Activated B cell treated with CpG ODN at 0.5 μM for 24 hours (primary cell): ENCODE measurements at regions of chr1 and their contacts with region 1.

Region 1: DNA sequence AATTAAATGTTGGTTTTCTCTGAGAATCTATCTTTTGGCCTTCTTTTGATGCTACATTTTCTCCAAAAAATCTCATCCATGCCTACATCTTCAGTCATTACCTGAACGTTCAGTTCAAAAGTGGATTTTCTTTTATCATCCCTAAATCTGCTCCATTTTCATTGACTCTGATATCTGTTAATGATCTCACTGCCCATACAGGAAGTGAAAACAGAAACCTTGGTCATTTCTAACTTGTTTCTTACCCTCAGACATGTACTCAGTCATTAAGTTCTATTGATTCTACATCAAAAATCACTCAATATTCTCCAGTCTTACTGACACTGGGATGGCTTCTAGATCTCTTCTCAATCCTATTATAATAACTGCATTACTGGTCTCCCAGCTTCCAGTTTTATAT is 22.7 kb downstream of the PRKACB start:
- DNase-seq: no peak
- ATAC-seq: peak; percentile 77
- H3K4me3 Mint-ChIP-seq: peak overlapping the region; percentile 1
- H3K27ac Mint-ChIP-seq: peak overlapping the region; percentile 42
- H3K4me1 Mint-ChIP-seq: peaks cover 70% of the 10 kb centered on the region
- H3K27me3 Mint-ChIP-seq: no peaks in the 10 kb centered on the region
- CTCF ChIP-seq: no peak

Region 2: DNA sequence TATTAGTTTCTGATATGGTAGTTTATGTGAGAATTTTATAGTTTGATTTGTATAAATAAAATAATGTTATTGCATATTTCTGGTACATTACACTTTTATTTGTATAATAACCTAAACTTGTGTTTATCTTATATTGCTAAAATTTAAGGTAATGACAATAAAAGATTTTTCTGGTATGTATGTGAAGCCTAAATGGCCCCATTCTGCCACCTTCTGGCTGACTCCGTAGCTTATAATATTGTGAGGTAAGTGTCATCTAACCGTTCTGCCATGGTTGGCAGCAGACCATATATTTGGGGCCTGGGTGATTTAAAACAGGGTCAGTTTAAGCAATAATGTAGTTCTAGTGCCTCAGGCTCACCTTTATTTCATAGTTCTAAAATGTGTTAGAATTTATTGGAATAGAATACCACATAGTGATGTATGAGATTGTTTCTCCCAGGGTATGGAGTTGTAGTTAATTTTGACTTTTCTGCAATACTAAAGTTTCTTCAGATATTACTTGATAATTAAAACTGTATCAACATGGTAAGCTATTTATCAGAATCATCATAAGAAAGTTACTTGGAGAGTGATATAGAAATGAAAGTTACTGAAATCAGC is 43.9 kb before region 1 on chr1:
- CTCF ChIA-PET with region 1: no interaction called
- POLR2A ChIA-PET with region 1: no interaction called
- intact Hi-C with region 1: no loop called
- DNase-seq: no peak
- ATAC-seq: peak; percentile 49
- H3K4me3 Mint-ChIP-seq: no peak overlapping the region
- H3K27ac Mint-ChIP-seq: no peak overlapping the region
- H3K4me1 Mint-ChIP-seq: no peaks in the 10 kb centered on the region
- H3K27me3 Mint-ChIP-seq: no peaks in the 10 kb centered on the region
- CTCF ChIP-seq: no peak

Region 3: DNA sequence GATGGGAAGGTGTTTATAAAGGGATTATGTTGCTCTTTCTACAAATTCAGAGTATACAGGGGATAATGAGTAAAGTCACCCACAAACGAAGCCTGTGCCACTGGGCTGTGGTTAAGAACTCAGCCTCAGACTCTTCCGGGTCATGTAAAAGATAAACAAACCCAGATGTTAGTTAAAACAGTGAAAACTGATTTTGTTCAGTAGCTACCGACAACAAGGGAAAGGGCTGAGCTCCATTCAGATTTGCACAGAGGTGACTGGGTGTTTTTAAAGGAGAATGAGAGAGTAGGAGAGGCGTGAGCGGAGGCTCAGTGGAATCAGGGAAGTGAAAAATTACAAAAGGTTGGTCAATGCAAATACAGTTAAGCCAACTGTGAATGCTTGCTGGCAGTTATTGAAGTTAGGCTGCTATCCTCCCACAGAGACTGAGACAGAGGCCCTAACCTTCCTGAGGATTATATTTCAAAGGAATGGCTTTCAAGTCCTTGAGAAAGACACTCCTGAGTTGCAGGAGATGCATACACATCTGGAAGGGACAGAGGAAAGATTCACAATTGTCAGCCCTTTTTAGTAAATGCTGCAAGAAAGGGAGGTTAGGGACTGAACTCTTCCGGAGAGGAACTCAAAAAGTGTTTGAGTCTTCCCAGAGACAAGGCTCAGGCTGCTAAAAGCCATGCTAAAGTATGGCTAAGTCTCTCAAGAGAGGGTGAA is 104.8 kb after region 1 on chr1:
- CTCF ChIA-PET with region 1: no interaction called
- POLR2A ChIA-PET with region 1: no interaction called
- intact Hi-C with region 1: loop called (anchors 5 kb)
- DNase-seq: no peak
- ATAC-seq: peak; percentile 95
- H3K4me3 Mint-ChIP-seq: peak overlapping the region; percentile 60
- H3K27ac Mint-ChIP-seq: peak overlapping the region; percentile 85
- H3K4me1 Mint-ChIP-seq: peaks cover 25% of the 10 kb centered on the region
- H3K27me3 Mint-ChIP-seq: no peaks in the 10 kb centered on the region
- CTCF ChIP-seq: no peak